ENCODE measurements at regions of chr14 and their contacts with region 1.

Region 1: GRCh38 chr14:93655078-93655750 is 133.1 kb downstream of the PRIMA1 start:
- DNase-seq: no peak
- H3K4me3 Mint-ChIP-seq: no peak overlapping the region
- H3K27ac Mint-ChIP-seq: no peak overlapping the region
- H3K4me1 Mint-ChIP-seq: no peaks in the 10 kb centered on the region
- H3K27me3 Mint-ChIP-seq: peaks cover 4% of the 10 kb centered on the region

Region 2: GRCh38 chr14:93906341-93907329 is 251.4 kb after region 1 on chr14:
- CTCF ChIA-PET with region 1: interaction called, 30 read pairs
- DNase-seq: peak; percentile 80
- H3K4me3 Mint-ChIP-seq: no peak overlapping the region
- H3K27ac Mint-ChIP-seq: peak overlapping the region; percentile 33
- H3K4me1 Mint-ChIP-seq: no peaks in the 10 kb centered on the region
- H3K27me3 Mint-ChIP-seq: peaks cover 54% of the 10 kb centered on the region

Region 3: DNA sequence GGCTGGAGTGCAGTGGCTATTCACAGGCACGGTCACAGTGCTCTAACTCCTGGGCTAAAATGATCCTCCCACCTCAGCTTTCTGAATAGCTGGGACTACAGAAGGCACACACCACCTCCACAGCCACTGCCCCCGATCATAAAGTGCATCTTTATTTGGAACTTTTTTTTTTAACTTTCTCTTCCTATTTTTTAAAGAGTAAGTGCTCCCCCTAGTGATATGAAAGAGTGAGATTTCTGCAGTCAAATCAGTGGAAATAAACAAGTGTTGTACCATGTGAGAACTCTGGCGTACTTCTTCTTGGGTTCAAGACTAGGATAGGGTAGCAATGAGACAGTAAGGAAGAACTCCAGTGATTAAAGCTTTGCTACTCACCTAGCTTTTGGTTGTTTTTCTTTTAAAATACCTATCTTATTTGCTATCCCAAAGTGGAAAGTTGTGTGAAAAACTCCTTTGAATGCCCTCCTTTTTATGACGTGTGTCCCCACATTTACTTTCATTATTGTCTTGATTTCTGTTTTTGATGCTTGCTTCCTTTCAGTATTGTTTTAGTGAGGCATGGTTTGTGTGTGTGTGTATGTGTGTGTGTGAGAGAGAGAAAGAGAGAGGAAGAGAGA is 525.5 kb after region 1 on chr14:
- CTCF ChIA-PET with region 1: interaction called, 15 read pairs
- DNase-seq: peak; percentile 41
- H3K4me3 Mint-ChIP-seq: peak overlapping the region; percentile 44
- H3K27ac Mint-ChIP-seq: peak overlapping the region; percentile 51
- H3K4me1 Mint-ChIP-seq: peaks cover 18% of the 10 kb centered on the region
- H3K27me3 Mint-ChIP-seq: peaks cover 16% of the 10 kb centered on the region

Measured in activated naive CD4-positive, alpha-beta T cell treated with anti-CD3 and anti-CD28 coated beads, Interleukin-2, amount 10 ng/mL, durations not matched to agents 7 days and 5 days (primary cell).